ENCODE measurements at regions of chr1 and their contacts with region 1.

Region 1: GRCh38 chr1:236281654-236282424 is at the start of gene ERO1B:
- DNase-seq: peak; percentile 98
- ATAC-seq: peak; percentile 86
- H3K4me3 Mint-ChIP-seq: peak within 1 kb of the TSS; percentile 82
- H3K27ac Mint-ChIP-seq: peak within 1 kb of the TSS; percentile 70
- H3K4me1 Mint-ChIP-seq: peaks cover 47% of the 10 kb centered on the region
- H3K27me3 Mint-ChIP-seq: peaks cover 1% of the 10 kb centered on the region
- total RNA-seq, gene ERO1B: 2.2 to 2.8 TPM

Region 2: DNA sequence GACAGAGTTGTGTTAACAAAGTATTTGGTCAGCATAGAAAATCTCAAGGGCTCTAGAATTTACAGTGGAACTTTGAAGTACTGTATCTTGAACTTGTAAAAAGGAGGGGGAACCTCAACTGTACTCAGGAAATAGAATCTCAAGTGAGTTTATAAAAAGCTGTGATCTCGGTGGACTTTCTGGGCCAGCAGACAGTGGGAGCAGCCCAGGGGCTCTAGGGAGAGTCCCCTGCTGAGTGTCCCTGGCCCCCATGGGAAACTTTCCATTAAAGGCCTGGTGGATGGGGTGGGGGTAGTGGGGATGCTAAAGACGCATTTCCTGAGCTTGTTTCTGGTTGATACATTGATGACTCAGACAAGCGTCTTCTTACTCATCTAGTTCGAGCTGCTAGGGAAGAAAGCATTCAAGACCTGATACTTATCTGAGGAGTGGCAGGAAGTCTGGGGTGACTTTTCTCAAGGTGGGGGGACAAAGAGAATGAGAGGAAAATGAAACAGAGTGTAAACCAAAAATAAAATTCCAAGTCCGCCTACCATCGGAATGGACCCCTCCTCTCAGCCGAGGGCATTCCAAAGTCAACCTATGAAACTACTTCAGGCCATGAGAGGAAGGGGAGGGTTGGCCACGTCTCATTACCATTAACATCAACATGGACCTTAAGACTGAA is 282.4 kb before region 1 on chr1:
- CTCF ChIA-PET with region 1: no interaction called
- POLR2A ChIA-PET with region 1: interaction called, 5 read pairs
- intact Hi-C with region 1: loop called (anchors 5 kb)
- DNase-seq: peak; percentile 76
- ATAC-seq: peak; percentile 85
- H3K4me3 Mint-ChIP-seq: peak overlapping the region; percentile 32
- H3K27ac Mint-ChIP-seq: peak overlapping the region; percentile 94
- H3K4me1 Mint-ChIP-seq: peaks cover 58% of the 10 kb centered on the region
- H3K27me3 Mint-ChIP-seq: no peaks in the 10 kb centered on the region

Region 3: DNA sequence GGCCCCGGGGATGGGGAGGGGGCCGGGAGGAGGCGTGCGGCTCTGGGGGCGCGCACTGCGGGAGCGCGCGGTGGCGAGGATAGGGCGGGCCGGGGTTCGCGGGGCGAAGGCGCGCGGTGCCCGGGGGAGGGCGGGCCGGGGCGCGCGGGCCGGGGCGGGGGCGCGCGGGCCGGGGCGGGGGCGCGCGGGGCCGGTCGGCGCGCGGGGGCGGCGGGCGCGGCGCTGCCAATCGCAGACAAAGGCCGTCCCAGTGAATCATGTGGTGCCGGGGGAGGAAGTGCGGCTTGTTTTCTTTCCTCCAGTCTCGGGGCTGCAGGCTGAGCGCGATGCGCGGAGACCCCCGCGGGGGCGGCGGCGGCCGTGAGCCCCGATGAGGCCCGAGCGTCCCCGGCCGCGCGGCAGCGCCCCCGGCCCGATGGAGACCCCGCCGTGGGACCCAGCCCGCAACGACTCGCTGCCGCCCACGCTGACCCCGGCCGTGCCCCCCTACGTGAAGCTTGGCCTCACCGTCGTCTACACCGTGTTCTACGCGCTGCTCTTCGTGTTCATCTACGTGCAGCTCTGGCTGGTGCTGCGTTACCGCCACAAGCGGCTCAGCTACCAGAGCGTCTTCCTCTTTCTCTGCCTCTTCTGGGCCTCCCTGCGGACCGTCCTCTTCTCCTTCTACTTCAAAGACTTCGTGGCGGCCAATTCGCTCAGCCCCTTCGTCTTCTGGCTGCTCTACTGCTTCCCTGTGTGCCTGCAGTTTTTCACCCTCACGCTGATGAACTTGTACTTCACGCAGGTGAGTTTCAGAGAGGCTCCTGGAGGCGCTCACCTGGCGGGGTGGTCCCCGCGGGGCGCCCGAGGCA is 139.4 kb before region 1 on chr1 and contains the start of gene GPR137B:
- CTCF ChIA-PET with region 1: no interaction called
- POLR2A ChIA-PET with region 1: interaction called, 4 read pairs
- intact Hi-C with region 1: loop called (anchors 1 kb)
- DNase-seq: peak; percentile 78
- ATAC-seq: peak; percentile 67
- H3K4me3 Mint-ChIP-seq: peak within 1 kb of the TSS; percentile 95
- H3K27ac Mint-ChIP-seq: peak within 1 kb of the TSS; percentile 84
- H3K4me1 Mint-ChIP-seq: peaks cover 15% of the 10 kb centered on the region
- H3K27me3 Mint-ChIP-seq: peaks cover 34% of the 10 kb centered on the region
- total RNA-seq, gene GPR137B: 5.0 to 5.6 TPM

Region 4: DNA sequence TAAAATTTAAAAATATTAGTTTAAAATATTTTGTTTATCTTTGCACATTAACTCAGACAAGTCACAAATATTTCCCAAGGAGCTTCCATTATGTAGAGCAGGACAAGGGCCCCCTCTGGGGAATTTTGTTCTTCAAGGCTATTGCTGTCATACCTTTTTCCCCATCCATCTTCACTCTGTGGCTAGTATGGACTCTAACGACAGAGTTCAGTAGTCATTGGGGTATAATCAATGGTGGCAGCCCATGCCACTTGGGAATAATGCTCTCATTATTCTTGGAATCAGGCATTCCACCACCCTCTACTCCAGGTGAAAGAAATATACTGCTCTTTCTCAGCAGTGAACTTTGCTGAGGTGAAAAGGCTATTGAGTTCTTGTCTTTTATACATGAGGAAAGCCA is 38.4 kb after region 1 on chr1:
- CTCF ChIA-PET with region 1: no interaction called
- POLR2A ChIA-PET with region 1: no interaction called
- intact Hi-C with region 1: no loop called
- DNase-seq: no peak
- ATAC-seq: no peak
- H3K4me3 Mint-ChIP-seq: no peak overlapping the region
- H3K27ac Mint-ChIP-seq: no peak overlapping the region
- H3K4me1 Mint-ChIP-seq: no peaks in the 10 kb centered on the region
- H3K27me3 Mint-ChIP-seq: peaks cover 7% of the 10 kb centered on the region

Region 5: DNA sequence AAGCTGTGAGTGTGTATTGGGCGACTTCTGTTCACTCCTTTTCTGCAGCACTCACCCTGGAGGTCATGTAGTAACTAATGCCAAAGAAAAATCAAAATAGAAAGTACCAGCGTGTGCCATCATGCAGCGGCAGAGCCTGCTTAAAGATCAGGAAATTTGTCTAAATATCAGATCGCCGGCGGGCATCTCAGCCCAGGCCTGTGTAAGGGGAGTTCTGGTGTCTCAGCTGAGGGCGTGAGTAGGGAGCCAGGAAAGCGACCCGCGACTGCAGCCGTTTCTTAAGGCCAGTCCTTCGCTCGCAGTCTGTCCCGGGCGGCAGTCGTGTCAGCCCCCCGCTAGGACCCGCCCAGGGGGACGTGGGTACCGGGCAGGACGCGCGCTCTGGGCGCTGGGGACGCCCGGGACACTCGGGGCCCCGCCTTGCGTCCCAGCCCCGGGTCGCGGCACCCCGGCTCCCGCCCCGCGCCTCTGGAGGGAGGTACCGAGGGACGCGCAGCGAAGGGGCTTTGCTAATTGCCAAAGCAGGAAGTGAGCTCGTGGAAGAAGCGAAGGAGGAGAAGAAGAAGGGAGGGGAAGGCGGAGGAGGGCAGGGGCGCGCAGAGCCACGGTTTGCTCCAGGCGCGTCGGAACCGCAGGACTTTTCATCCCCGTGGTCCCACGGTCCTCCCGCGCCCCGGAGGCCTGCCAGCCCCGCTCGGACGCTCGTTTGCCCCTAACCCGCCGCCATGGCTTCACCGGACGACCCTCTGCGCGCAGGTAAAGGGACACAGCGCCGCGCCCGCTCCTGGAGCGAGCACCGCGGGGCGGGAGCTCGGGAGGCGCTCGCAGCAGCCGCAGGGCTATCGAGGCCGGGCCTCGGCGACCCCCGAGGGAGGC is 113.3 kb after region 1 on chr1:
- CTCF ChIA-PET with region 1: no interaction called
- POLR2A ChIA-PET with region 1: no interaction called
- intact Hi-C with region 1: loop called in 1 of 2 experiments (anchors 2 kb)
- DNase-seq: peak; percentile 63
- ATAC-seq: peak; percentile 58
- H3K4me3 Mint-ChIP-seq: peak overlapping the region; percentile 79
- H3K27ac Mint-ChIP-seq: peak overlapping the region; percentile 68
- H3K4me1 Mint-ChIP-seq: peaks cover 28% of the 10 kb centered on the region
- H3K27me3 Mint-ChIP-seq: peaks cover 49% of the 10 kb centered on the region

Region 6: DNA sequence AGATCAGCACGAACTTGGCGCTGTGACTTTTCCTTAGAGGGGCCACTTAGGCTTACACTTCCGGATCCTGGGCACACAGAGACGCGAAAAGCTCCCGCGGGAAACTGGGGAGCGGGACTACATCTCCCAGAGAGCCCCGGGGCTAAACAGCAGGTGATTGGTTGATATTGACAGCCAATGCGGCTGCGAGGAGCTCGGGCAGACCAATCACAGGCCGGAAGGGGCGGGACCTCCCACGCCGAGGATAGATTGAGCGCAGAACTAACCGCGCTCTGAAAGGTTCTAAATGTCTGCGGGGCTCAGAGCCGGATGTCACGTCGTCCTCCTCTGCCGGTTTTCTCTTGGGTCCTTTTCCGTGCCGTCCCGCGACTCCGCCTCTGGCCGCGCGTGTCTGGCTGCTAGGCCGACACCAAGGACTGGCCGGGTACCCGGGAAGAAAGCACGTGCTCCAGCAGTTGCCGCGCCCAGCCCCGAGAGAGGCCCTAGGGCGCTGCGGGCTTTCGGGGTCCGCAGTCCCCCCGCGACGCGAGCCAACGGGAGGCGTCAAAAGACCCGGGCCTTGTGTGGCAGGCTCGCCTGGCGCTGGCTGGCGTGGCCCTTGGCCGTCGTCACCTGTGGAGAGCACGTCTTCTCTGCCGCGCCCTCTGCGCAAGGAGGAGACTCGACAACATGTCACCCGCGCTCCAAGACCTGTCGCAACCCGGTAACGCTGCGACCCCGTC is 513.4 kb after region 1 on chr1 and contains the start of gene MTR:
- CTCF ChIA-PET with region 1: no interaction called
- POLR2A ChIA-PET with region 1: no interaction called
- intact Hi-C with region 1: loop called (anchors 1 to 10 kb)
- DNase-seq: peak; percentile 98
- ATAC-seq: peak; percentile 95
- H3K4me3 Mint-ChIP-seq: peak within 1 kb of the TSS; percentile 97
- H3K27ac Mint-ChIP-seq: peak within 1 kb of the TSS; percentile 100
- H3K4me1 Mint-ChIP-seq: peaks cover 33% of the 10 kb centered on the region
- H3K27me3 Mint-ChIP-seq: peaks cover 2% of the 10 kb centered on the region
- total RNA-seq, gene MTR: 57.3 to 64.8 TPM